ENCODE measurements at regions of chr6 and their contacts with region 1.

Region 1: GRCh38 chr6:26204332-26205165 is 117.3 kb downstream of the HFE start:
- DNase-seq: peak; percentile 73 to 96 (median 82)
- ATAC-seq: peak; percentile 63 to 70 (median 68)
- H3K4me3 ChIP-seq: peak overlapping the region; percentile 73 to 98
- H3K4me3 Mint-ChIP-seq: no peak overlapping the region
- H3K27ac ChIP-seq: peak overlapping the region; percentile 93
- H3K27ac Mint-ChIP-seq: no peak overlapping the region
- H3K4me1 ChIP-seq: peaks cover 23 to 37% of the 10 kb centered on the region in 2 experiments
- H3K4me1 Mint-ChIP-seq: peaks cover 17 to 28% (median 24%) of the 10 kb centered on the region in 3 donors
- H3K27me3 ChIP-seq: no peaks in the 10 kb centered on the region
- H3K27me3 Mint-ChIP-seq: no peaks in the 10 kb centered on the region

Region 2: DNA sequence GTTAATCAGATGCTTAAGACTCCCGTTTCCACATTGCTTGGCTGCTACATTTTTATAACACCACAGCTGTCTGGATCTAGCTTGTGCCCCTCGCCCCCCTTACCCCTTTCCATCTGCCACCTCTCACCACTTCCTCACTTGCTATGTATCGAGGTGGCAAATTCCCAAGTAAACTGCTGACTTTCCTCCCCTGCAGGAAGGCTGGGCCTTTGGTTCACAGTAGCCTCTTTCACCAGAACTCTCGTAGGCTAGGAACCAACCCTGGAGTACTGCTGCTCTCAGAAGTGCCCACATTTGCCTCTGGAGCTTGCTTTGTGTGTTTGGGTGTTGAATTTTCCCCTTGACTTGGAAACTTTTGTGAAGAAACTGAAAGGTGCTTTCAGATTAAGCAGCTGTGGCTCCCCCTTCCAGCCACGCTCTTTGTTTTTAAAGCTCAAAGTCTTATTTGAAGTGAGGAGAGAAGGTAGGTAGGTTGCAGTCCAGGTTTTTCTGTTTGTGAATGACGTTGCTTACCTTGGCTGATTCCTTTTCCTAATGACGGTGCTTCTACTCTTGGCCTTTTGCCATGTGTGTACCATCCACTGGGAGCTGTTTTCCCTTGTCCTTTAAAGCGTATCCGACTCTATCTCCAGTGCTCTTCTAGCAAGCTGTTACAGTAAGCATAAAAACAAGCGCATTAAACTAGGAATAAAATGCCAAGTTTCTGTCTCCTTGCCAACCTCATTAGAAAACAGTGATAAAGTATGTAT is 834.9 kb before region 1 on chr6:
- CTCF ChIA-PET with region 1: no interaction called
- POLR2A ChIA-PET with region 1: no interaction called
- DNase-seq: peak in 21 of 35 experiments; percentile 2 to 53 (median 15)
- ATAC-seq: peak in 3 of 4 experiments; percentile 33 to 55 (median 37)
- H3K4me3 ChIP-seq: peak overlapping the region; percentile 2 to 33
- H3K4me3 Mint-ChIP-seq: peak overlapping the region; percentile 60 to 88 (median 66)
- H3K27ac ChIP-seq: peak overlapping the region; percentile 85
- H3K27ac Mint-ChIP-seq: peak overlapping the region; percentile 98
- H3K4me1 ChIP-seq: peaks cover 30 to 48% of the 10 kb centered on the region in 2 experiments
- H3K4me1 Mint-ChIP-seq: peaks cover 76 to 82% (median 79%) of the 10 kb centered on the region in 3 donors
- H3K27me3 ChIP-seq: no peaks in the 10 kb centered on the region
- H3K27me3 Mint-ChIP-seq: no peaks in the 10 kb centered on the region

Region 3: GRCh38 chr6:26183581-26184366 is 20.8 kb before region 1 on chr6:
- CTCF ChIA-PET with region 1: interaction called in 1 of 2 experiments, 37 read pairs
- POLR2A ChIA-PET with region 1: interaction called, 39 to 122 read pairs
- DNase-seq: peak in 25 of 35 experiments; percentile 20 to 85 (median 42)
- ATAC-seq: peak; percentile 87 to 91 (median 89)
- H3K4me3 ChIP-seq: peak overlapping the region; percentile 57 to 83
- H3K4me3 Mint-ChIP-seq: peak overlapping the region; percentile 88 to 96 (median 93)
- H3K27ac ChIP-seq: peak overlapping the region; percentile 76
- H3K27ac Mint-ChIP-seq: peak overlapping the region; percentile 94 to 98
- H3K4me1 ChIP-seq: peaks cover 12 to 30% of the 10 kb centered on the region in 2 experiments
- H3K4me1 Mint-ChIP-seq: peaks cover 42 to 48% (median 46%) of the 10 kb centered on the region in 3 donors
- H3K27me3 ChIP-seq: no peaks in the 10 kb centered on the region
- H3K27me3 Mint-ChIP-seq: no peaks in the 10 kb centered on the region

Region 4: GRCh38 chr6:26531897-26532296 is 327.3 kb after region 1 on chr6:
- CTCF ChIA-PET with region 1: no interaction called
- POLR2A ChIA-PET with region 1: no interaction called
- DNase-seq: no peak
- ATAC-seq: no peak
- H3K4me3 ChIP-seq: no peak overlapping the region
- H3K4me3 Mint-ChIP-seq: peak overlapping the region in 2 of 3 donors; percentile 92 to 97
- H3K27ac ChIP-seq: peak overlapping the region; percentile 60
- H3K27ac Mint-ChIP-seq: peak overlapping the region; percentile 97 to 98
- H3K4me1 ChIP-seq: peaks cover 18 to 26% of the 10 kb centered on the region in 2 experiments
- H3K4me1 Mint-ChIP-seq: peaks cover 44 to 57% (median 56%) of the 10 kb centered on the region in 3 donors
- H3K27me3 ChIP-seq: no peaks in the 10 kb centered on the region
- H3K27me3 Mint-ChIP-seq: peaks cover 0 to 3% of the 10 kb centered on the region in 2 donors

Region 5: DNA sequence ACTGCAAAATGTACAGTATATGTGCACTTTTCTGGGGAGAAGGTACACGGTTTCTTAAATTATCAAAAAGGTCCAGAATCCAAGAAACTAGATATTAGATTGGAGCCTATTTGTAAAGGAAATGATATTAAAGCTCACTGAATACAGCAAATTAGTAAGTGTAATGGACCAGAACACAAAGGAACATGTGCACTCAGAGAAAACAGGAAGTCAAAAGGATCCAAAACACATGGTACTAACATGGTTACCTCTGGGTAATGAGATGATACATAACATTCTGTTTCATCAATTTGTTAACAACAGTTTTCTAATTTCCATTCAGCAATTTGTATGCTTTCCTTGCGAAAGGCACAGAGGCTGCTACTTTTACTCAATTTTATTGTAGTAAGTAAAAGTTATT is 436.3 kb after region 1 on chr6:
- CTCF ChIA-PET with region 1: no interaction called
- POLR2A ChIA-PET with region 1: no interaction called
- DNase-seq: no peak
- ATAC-seq: no peak
- H3K4me3 ChIP-seq: no peak overlapping the region
- H3K4me3 Mint-ChIP-seq: no peak overlapping the region
- H3K27ac ChIP-seq: no peak overlapping the region
- H3K27ac Mint-ChIP-seq: no peak overlapping the region
- H3K4me1 ChIP-seq: no peaks in the 10 kb centered on the region
- H3K4me1 Mint-ChIP-seq: peaks cover 0 to 4% (median 0%) of the 10 kb centered on the region in 3 donors
- H3K27me3 ChIP-seq: no peaks in the 10 kb centered on the region
- H3K27me3 Mint-ChIP-seq: no peaks in the 10 kb centered on the region

Measured in T-cell (primary cell).